HepG2 (cell line): ENCODE measurements at regions of chr2 and their contacts with region 1.

Region 1: GRCh38 chr2:101001691-101002561 is at the start of gene RPL31:
- DNase-seq: peak; percentile 98
- ATAC-seq: peak; percentile 91
- H3K4me3 ChIP-seq: peak within 1 kb of the TSS; percentile 81 to 96 (median 91)
- H3K27ac ChIP-seq: peak within 1 kb of the TSS; percentile 79
- H3K4me1 ChIP-seq: peaks cover 43% of the 10 kb centered on the region
- H3K27me3 ChIP-seq: no peaks in the 10 kb centered on the region; a peak in 1 of 5 replicates
- CTCF ChIP-seq: no peak; the same call in 1 of the 2 replicates
- EP300 ChIP-seq: peak; percentile 39 to 42; a peak in 2 of 4 replicates
- POLR2A ChIP-seq: peak; percentile 99 to 100
- RAD21 ChIP-seq: no peak; the same call in 1 of the 2 replicates
- total RNA-seq, gene RPL31: 3,331 and 4,246 TPM in 2 replicates

Region 2: GRCh38 chr2:100562732-100563720 is 438.9 kb before region 1 on chr2 and contains the start of gene PDCL3:
- CTCF ChIA-PET with region 1: no interaction called
- POLR2A ChIA-PET with region 1: interaction called, 26 read pairs
- in situ Hi-C with region 1: no loop called
- intact Hi-C with region 1: no loop called
- DNase-seq: peak; percentile 98
- ATAC-seq: peak; percentile 96
- H3K4me3 ChIP-seq: peak within 1 kb of the TSS; percentile 63 to 100 (median 99)
- H3K27ac ChIP-seq: peak within 1 kb of the TSS; percentile 87
- H3K4me1 ChIP-seq: peaks cover 47% of the 10 kb centered on the region
- H3K27me3 ChIP-seq: no peaks in the 10 kb centered on the region; a peak in 1 of 5 replicates
- CTCF ChIP-seq: peak; percentile 64
- EP300 ChIP-seq: no peak
- POLR2A ChIP-seq: peak; percentile 83 to 91
- RAD21 ChIP-seq: peak; percentile 66
- total RNA-seq, gene PDCL3: 24.4 and 36.9 TPM in 2 replicates

Region 3: GRCh38 chr2:100610381-100610831 is 391.5 kb before region 1 on chr2:
- CTCF ChIA-PET with region 1: no interaction called
- POLR2A ChIA-PET with region 1: interaction called, 3 read pairs
- in situ Hi-C with region 1: loop called (anchors 5 kb)
- intact Hi-C with region 1: no loop called
- DNase-seq: peak; percentile 36
- ATAC-seq: peak; percentile 77
- H3K4me3 ChIP-seq: no peak overlapping the region
- H3K27ac ChIP-seq: no peak overlapping the region
- H3K4me1 ChIP-seq: peaks cover 19% of the 10 kb centered on the region
- H3K27me3 ChIP-seq: peaks cover 2 to 56% of the 10 kb centered on the region in 2 experiments; a peak in 4 of 5 replicates
- CTCF ChIP-seq: peak; percentile 94
- EP300 ChIP-seq: no peak
- POLR2A ChIP-seq: no peak
- RAD21 ChIP-seq: peak; percentile 62

Region 4: GRCh38 chr2:101012706-101013181 is 10.8 kb after region 1 on chr2:
- CTCF ChIA-PET with region 1: no interaction called
- POLR2A ChIA-PET with region 1: interaction called, 17 read pairs
- in situ Hi-C with region 1: no loop called
- intact Hi-C with region 1: no loop called
- DNase-seq: peak; percentile 50
- ATAC-seq: no peak
- H3K4me3 ChIP-seq: no peak overlapping the region
- H3K27ac ChIP-seq: no peak overlapping the region
- H3K4me1 ChIP-seq: no peaks in the 10 kb centered on the region
- H3K27me3 ChIP-seq: no peaks in the 10 kb centered on the region
- CTCF ChIP-seq: peak; percentile 85
- EP300 ChIP-seq: no peak
- POLR2A ChIP-seq: no peak; a peak in 1 of 4 replicates
- RAD21 ChIP-seq: peak; percentile 82